BJ (cell line): ENCODE measurements at regions of chr10 and their contacts with region 1.

Region 1: GRCh38 chr10:13787015-13787421 is 200.3 kb downstream of the PRPF18 start:
- DNase-seq: no peak
- H3K4me3 ChIP-seq: no peak overlapping the region
- H3K27me3 ChIP-seq: no peaks in the 10 kb centered on the region
- CTCF ChIP-seq: no peak

Region 2: DNA sequence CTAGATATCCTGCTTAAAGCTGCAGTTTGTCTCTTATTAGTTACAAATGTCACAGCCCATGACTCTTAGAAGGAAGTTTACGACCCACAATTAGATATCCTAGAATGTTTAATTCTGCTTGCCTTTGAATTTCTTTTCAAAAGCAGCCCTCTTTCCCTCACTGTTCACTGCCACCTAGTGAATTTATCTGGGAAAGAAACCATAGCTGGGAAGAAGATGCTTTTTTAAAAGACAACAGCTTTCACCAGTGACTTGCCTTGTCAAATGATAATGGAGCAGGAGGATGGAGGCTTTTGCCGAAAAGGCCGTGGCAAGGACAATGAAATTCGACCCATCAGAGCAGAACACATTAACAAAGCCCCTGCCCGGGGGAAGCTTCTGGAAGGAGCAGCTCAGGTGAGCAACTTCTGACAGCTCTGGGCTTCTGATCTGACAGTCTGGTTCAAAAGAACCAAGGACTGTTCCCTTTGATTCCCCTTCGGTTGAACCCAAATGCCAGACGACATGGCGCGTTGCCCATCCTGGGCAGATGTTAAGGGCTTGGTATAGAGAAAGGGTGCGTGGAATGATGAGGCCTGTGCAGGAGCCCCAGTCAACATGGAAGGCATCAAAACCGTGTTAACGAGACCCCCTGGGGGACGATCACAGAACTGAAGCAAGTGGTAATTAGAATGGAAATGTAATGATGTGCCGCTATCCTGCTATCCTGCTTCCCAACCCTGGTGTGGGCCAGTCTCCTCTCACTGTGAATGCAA is 306.9 kb after region 1 on chr10:
- CTCF ChIA-PET with region 1: interaction called, 31 read pairs
- POLR2A ChIA-PET with region 1: interaction called, 4 read pairs
- DNase-seq: no peak
- H3K4me3 ChIP-seq: no peak overlapping the region
- H3K27me3 ChIP-seq: no peaks in the 10 kb centered on the region
- CTCF ChIP-seq: peak; percentile 59